ENCODE measurements at regions of chr3 and their contacts with region 1.

Region 1: GRCh38 chr3:28840976-28841376 is 439.9 kb upstream of the RBMS3 start:
- DNase-seq: peak; percentile 65
- H3K4me3 Mint-ChIP-seq: no peak overlapping the region
- H3K27ac Mint-ChIP-seq: peak overlapping the region; percentile 56
- H3K4me1 Mint-ChIP-seq: peaks cover 6% of the 10 kb centered on the region
- H3K27me3 Mint-ChIP-seq: peaks cover 2% of the 10 kb centered on the region

Region 2: GRCh38 chr3:28667646-28668621 is 173.0 kb before region 1 on chr3:
- CTCF ChIA-PET with region 1: interaction called, 3 read pairs
- POLR2A ChIA-PET with region 1: interaction called, 3 read pairs
- intact Hi-C with region 1: loop called (anchors 1 kb)
- DNase-seq: peak; percentile 64
- H3K4me3 Mint-ChIP-seq: no peak overlapping the region
- H3K27ac Mint-ChIP-seq: no peak overlapping the region
- H3K4me1 Mint-ChIP-seq: peaks cover 4% of the 10 kb centered on the region
- H3K27me3 Mint-ChIP-seq: peaks cover 5% of the 10 kb centered on the region

Region 3: DNA sequence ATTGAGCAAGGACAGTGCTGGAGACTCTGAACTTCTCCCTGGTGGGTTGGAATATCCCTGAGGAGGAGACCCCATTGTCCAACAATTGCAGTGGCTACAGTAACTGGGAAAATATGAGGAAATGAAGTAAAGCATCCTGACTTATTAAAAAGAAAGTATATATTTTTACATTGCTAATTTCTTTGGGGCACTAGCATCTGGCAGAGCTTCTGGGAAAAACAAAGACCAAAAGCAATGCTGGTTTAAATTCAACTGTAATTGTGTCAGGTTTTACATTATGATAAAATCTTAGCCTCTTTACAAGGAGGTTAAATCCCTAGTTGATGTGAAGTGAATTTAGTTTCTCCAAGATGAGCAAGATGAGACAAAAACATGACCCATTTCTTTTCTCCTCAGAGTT is 14.1 kb before region 1 on chr3:
- CTCF ChIA-PET with region 1: no interaction called
- POLR2A ChIA-PET with region 1: no interaction called
- intact Hi-C with region 1: no loop called
- DNase-seq: no peak
- H3K4me3 Mint-ChIP-seq: no peak overlapping the region
- H3K27ac Mint-ChIP-seq: no peak overlapping the region
- H3K4me1 Mint-ChIP-seq: no peaks in the 10 kb centered on the region
- H3K27me3 Mint-ChIP-seq: peaks cover 2% of the 10 kb centered on the region

Region 4: GRCh38 chr3:28924744-28925360 is 83.9 kb after region 1 on chr3:
- CTCF ChIA-PET with region 1: no interaction called
- POLR2A ChIA-PET with region 1: no interaction called
- intact Hi-C with region 1: loop called (anchors 2 kb)
- DNase-seq: no peak
- H3K4me3 Mint-ChIP-seq: no peak overlapping the region
- H3K27ac Mint-ChIP-seq: no peak overlapping the region
- H3K4me1 Mint-ChIP-seq: no peaks in the 10 kb centered on the region
- H3K27me3 Mint-ChIP-seq: no peaks in the 10 kb centered on the region

Region 5: DNA sequence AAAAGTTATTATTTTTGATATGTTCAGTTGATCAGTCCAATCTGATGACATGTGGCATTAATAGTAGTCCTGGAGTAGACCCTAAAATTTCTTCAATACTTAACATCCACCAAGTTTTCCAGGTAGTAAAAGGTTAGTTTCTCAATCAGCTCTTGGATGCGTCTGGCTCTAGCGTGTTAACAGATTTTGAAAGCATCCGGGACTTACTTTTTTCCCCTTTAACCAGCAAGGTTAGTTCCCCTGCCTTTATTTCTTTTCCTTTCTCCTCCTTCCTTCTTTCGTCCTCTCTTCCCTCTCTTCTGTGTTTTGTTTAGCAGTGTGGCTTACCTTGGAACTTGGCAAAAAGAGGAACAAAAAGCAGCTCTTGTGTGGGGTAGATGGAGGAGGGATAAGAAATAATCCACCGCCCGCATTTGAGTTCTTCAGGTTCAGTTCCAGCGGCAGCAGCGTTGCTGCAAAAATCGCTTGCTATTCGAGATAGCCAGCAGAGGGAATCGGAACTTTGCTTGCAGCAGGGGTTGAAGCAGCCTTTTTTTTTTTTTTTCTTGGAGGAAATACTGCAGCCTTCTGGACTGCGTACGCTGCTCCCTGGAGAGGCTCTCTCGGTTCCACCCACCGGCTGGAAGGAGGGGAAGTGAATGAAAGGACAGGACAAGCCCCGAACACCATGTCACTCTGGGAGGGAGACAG is 439.6 kb after region 1 on chr3 and contains the start of gene RBMS3:
- CTCF ChIA-PET with region 1: no interaction called
- POLR2A ChIA-PET with region 1: no interaction called
- intact Hi-C with region 1: loop called (anchors 1 kb)
- DNase-seq: peak; percentile 17
- H3K4me3 Mint-ChIP-seq: peak within 1 kb of the TSS; percentile 64
- H3K27ac Mint-ChIP-seq: peak within 1 kb of the TSS; percentile 57
- H3K4me1 Mint-ChIP-seq: peaks cover 24% of the 10 kb centered on the region
- H3K27me3 Mint-ChIP-seq: peaks cover 13% of the 10 kb centered on the region
- total RNA-seq, gene RBMS3: 1.6 TPM